Activated T-helper 1 cell treated with anti-CD3 and anti-CD28 coated beads, Interleukin-12 subunit alpha, Interleukin-12 subunit beta, Interleukin-2, Interleukin-4 antibody, amounts not matched to agents 30 ng/mL and 10 ng/mL and 1 ng/mL, durations not matched to agents 14 hours and 24 hours and 36 hours (primary cell): ENCODE measurements at regions of chr13 and their contacts with region 1.

Region 1: DNA sequence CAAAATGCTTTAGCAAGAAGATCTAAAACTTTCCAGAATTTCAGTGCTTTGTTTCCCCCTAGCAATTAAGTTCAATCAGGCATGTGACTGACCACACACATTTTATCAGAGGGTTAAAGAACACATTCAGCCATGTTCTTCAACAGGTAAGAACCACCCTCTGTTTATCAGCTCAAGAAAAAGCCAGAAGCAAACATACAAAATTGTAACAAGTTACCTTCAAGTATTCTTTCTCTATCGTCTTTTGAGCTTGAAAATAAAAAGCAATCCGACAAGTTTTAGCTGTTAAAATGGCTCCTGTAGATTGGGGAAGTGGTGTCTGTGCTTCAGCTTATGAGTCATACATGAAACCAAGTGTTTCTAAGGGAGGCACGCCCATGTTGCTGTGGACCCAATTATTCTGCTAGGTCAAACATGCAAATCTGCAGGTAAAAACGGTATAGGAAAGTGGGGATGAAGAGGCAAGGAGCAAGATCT is at the start of gene ELF1:
- DNase-seq: peak; percentile 49
- H3K4me3 Mint-ChIP-seq: peak within 1 kb of the TSS; percentile 91
- H3K27ac Mint-ChIP-seq: peak within 1 kb of the TSS; percentile 97
- H3K4me1 Mint-ChIP-seq: peaks cover 53% of the 10 kb centered on the region
- H3K27me3 Mint-ChIP-seq: no peaks in the 10 kb centered on the region
- total RNA-seq, gene ELF1: 75.3 and 76.8 TPM in 2 replicates

Region 2: DNA sequence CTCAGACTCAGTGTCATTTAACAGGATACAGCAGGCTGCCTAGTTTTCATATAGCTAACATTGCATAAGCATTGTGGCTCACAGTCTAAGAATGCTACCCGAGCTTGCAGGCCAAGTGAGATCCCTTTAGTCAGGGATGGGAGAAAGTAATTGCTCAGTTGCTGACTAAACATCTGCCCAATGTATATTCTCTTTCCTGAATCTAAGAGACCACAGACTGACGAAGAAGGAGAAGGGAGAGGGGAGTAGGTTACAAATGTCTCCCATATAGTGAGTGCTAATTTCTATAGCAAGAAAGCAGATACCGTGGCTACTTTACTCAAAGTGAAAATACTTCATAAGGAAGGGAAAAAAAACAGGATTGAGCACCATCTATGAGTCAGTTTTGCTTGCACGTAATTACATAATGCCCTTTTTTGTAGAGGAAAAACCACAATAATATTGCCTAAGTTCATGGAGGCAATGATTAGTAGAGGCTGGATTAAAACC is 909.6 kb before region 1 on chr13:
- intact Hi-C with region 1: no loop called
- DNase-seq: no peak
- H3K4me3 Mint-ChIP-seq: no peak overlapping the region
- H3K27ac Mint-ChIP-seq: peak overlapping the region; percentile 31
- H3K4me1 Mint-ChIP-seq: peaks cover 47% of the 10 kb centered on the region
- H3K27me3 Mint-ChIP-seq: no peaks in the 10 kb centered on the region

Region 3: DNA sequence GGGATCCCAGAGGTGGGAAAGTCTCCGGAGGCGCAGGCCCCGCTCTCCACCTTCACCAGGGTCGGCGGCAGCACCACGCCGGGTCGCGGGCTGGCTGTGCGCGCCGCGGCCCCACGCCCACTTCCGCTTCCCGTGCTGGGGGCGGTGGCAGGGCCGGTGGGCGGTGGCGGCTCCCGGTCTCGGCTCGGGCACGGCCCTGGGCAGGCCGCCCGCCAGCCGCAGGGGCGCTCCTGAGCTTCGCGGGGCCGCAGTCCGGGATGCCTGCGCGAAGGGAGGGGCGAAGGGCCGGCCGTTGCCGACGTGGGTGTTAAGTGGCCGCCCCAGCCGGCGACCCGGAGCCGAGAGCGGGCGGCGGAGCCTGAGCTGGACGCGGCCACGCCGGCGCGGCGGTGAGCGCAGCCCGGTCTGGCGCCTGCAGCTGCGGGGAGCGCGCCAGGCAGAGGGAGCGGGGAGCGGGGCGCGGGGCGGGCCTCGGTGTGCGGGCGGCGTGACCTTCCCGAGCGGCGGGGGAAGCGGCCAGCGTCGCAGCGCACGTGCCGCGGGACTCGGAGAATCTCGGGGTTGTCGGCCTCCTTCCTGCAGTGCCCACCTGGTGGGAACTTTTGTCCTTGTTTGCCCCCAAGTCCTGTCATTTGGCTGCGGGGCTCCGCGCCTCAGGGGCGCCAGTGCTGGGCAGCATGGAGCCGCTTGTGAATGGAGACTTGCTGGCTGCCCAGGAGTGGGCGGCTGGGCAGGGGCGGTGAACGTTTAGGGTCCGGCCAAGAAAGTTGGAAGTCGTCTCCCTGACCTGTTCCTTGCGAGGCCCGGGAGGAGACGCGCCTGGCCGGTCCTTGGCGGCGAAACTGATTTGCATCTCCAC is 229.5 kb before region 1 on chr13 and contains the start of gene SLC25A15:
- intact Hi-C with region 1: loop called (anchors 10 kb)
- DNase-seq: peak; percentile 72
- H3K4me3 Mint-ChIP-seq: peak within 1 kb of the TSS; percentile 76
- H3K27ac Mint-ChIP-seq: peak within 1 kb of the TSS; percentile 59
- H3K4me1 Mint-ChIP-seq: peaks cover 19% of the 10 kb centered on the region
- H3K27me3 Mint-ChIP-seq: no peaks in the 10 kb centered on the region
- total RNA-seq, gene SLC25A15: 19.0 and 20.0 TPM in 2 replicates

Region 4: GRCh38 chr13:40969169-40969901 is 49.7 kb before region 1 on chr13:
- intact Hi-C with region 1: loop called (anchors 10 kb)
- DNase-seq: no peak
- H3K4me3 Mint-ChIP-seq: no peak overlapping the region
- H3K27ac Mint-ChIP-seq: peak overlapping the region; percentile 14
- H3K4me1 Mint-ChIP-seq: peaks cover 74% of the 10 kb centered on the region
- H3K27me3 Mint-ChIP-seq: no peaks in the 10 kb centered on the region

Region 5: GRCh38 chr13:41004875-41005693 is 14.0 kb before region 1 on chr13:
- intact Hi-C with region 1: loop called (anchors 1 kb)
- DNase-seq: no peak
- H3K4me3 Mint-ChIP-seq: peak overlapping the region; percentile 59
- H3K27ac Mint-ChIP-seq: peak overlapping the region; percentile 88
- H3K4me1 Mint-ChIP-seq: peaks cover 66% of the 10 kb centered on the region
- H3K27me3 Mint-ChIP-seq: no peaks in the 10 kb centered on the region